Activated CD8-positive, alpha-beta memory T cell treated with anti-CD3 and anti-CD28 coated beads, Interleukin-2, amount 10 ng/mL, durations not matched to agents 7 days and 5 days (primary cell): ENCODE measurements at regions of chr19 and their contacts with region 1.

Region 1: GRCh38 chr19:8355631-8356402 is 8.1 kb upstream of the ANGPTL4 start:
- DNase-seq: no peak
- ATAC-seq: no peak
- H3K4me3 Mint-ChIP-seq: no peak overlapping the region
- H3K27ac Mint-ChIP-seq: no peak overlapping the region
- H3K4me1 Mint-ChIP-seq: peaks cover 11% of the 10 kb centered on the region
- H3K27me3 Mint-ChIP-seq: peaks cover 13% of the 10 kb centered on the region

Region 2: GRCh38 chr19:8148410-8149231 is 207.2 kb before region 1 on chr19:
- CTCF ChIA-PET with region 1: no interaction called
- DNase-seq: no peak
- ATAC-seq: no peak
- H3K4me3 Mint-ChIP-seq: no peak overlapping the region
- H3K27ac Mint-ChIP-seq: no peak overlapping the region
- H3K4me1 Mint-ChIP-seq: peaks cover 3% of the 10 kb centered on the region
- H3K27me3 Mint-ChIP-seq: peaks cover 53% of the 10 kb centered on the region

Region 3: DNA sequence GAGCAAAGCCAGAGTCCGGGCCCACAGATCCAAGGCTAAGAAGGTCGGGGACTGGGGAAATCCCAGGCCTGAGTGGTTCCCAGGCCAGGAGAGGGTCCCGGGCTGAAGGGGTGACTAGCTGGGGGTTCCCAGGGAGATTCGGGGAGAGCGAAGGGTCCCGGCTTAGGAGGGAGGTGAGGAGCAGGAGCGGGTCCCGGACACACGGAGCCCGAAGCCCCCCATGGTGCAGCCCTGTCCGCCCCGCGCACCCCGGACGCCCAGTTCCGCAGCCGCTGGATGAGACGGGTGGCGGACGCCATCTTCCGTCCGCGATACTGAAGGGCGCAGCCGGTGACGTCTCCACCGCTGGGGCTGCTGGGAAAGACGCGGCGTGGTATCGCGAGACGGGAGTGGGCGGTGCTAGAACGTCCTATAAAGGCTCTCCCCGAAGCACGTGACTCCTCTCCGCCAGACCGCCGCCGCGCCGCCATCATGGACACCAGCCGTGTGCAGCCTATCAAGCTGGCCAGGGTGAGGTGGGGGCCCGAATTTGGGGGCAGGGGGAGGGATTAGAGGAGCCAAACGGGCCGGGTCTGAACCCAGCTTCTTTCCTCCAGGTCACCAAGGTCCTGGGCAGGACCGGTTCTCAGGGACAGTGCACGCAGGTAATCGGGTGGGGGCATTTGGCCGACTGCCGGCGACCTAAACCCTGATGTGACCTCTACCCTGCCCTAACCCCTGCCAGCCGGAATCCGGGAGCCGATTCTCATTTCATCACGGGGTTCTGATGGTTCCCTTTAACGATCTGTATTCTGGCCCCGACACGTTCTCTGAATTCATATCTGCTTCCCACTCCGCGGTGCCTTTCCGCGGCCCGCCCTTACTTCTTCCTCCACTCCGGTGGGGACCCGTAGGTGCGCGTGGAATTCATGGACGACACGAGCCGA is 34.5 kb before region 1 on chr19 and contains the starts of genes NDUFA7 and RPS28:
- CTCF ChIA-PET with region 1: interaction called, 12 read pairs
- DNase-seq: peak; percentile 98
- ATAC-seq: peak; percentile 92
- H3K4me3 Mint-ChIP-seq: peak within 1 kb of the TSS; percentile 99
- H3K27ac Mint-ChIP-seq: peak within 1 kb of the TSS; percentile 98
- H3K4me1 Mint-ChIP-seq: peaks cover 36% of the 10 kb centered on the region
- H3K27me3 Mint-ChIP-seq: no peaks in the 10 kb centered on the region
- total RNA-seq, gene NDUFA7: 47.4 to 66.7 TPM
- total RNA-seq, gene RPS28: 1,292 to 1,333 TPM

Region 4: GRCh38 chr19:8342684-8343482 is 12.9 kb before region 1 on chr19 and contains the start of gene KANK3:
- CTCF ChIA-PET with region 1: interaction called, 48 read pairs
- DNase-seq: peak; percentile 98
- ATAC-seq: peak; percentile 100
- H3K4me3 Mint-ChIP-seq: peak within 1 kb of the TSS; percentile 68
- H3K27ac Mint-ChIP-seq: no peak within 1 kb of the TSS
- H3K4me1 Mint-ChIP-seq: peaks cover 15% of the 10 kb centered on the region
- H3K27me3 Mint-ChIP-seq: peaks cover 21% of the 10 kb centered on the region
- total RNA-seq, gene KANK3: 3.2 to 3.7 TPM

Region 5: DNA sequence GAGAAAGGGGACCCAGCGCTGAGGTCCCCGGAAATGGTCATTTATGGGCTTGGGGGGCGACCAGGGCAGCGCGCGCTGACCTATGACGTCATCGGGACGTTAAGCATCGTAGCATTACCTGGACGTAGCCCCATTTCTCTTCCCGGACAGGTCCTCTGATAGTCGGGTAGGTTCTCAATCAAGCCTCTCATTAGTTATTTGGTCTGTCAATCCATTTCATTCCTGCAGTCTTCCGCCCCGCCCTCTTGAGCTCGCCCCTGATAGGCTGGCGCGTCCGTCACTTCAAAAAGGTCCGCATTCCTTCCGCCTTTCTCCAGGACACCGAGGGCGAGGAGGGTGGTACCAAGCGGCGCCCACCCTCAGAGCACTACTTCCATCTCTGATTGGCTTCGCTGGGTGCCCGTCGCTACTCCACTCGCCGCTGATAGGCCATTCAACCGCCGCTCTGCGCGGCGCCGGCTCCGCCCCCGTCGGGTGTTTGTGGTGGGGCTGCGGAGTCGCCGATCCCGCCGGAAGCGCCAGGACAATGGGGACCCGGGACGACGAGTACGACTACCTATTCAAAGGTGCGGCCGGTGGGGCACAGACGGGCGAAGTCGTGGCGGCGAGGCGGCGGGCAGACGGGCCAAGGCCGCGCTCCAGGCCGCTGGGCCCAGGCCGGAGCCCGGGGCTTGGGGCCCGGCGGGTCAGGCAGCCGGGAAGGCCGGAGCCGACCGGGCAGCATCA is 34.2 kb after region 1 on chr19 and contains the start of gene RAB11B:
- CTCF ChIA-PET with region 1: interaction called, 22 read pairs
- DNase-seq: peak; percentile 100
- ATAC-seq: peak; percentile 93
- H3K4me3 Mint-ChIP-seq: peak within 1 kb of the TSS; percentile 84
- H3K27ac Mint-ChIP-seq: peak within 1 kb of the TSS; percentile 98
- H3K4me1 Mint-ChIP-seq: peaks cover 25% of the 10 kb centered on the region
- H3K27me3 Mint-ChIP-seq: no peaks in the 10 kb centered on the region
- total RNA-seq, gene RAB11B: 96.2 to 97.3 TPM

Region 6: DNA sequence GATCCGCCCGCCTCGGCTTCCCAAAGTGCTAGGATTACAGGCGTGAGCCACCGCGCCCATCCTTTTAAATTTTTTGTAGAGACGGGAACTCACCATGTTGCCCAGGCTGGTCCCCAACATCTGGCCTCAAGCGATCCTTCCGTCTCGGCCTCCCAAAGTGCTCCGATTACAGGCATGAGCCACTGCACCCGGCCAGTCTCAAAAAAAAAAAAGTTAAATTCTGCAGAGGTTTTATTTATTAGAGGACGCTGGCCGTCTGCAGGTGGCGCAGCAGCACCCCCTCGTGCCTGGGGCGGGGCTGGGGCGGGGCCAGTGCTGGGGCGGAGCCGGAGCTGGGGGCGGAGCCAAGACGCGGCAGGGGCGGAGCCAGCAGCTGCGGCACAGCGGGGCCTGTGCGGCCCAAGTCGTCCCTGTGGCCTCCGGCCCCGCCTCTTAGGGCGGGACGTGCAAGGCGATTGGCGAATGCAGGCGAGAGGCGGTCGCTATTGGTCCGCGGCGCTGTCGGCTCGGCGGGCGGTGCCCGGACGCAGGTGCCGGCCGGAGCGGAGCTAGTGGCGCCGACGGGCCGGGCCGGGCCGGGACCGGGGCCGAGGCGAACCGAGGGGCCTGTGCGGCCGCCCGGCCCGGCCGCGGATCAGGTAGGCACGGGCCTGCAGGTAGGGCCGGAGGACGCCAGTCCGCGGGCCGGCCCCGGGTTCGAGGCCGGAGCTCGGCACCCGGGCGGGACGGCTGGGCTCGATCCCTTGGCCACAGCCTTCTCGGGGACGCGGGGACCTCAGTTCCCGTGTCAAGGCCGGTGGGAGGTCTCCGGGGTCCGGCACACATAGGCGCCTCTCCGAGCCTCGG is 57.2 kb after region 1 on chr19 and contains the start of gene MARCHF2:
- CTCF ChIA-PET with region 1: interaction called, 19 read pairs
- DNase-seq: peak; percentile 97
- ATAC-seq: peak; percentile 100
- H3K4me3 Mint-ChIP-seq: peak within 1 kb of the TSS; percentile 54
- H3K27ac Mint-ChIP-seq: peak within 1 kb of the TSS; percentile 61
- H3K4me1 Mint-ChIP-seq: peaks cover 8% of the 10 kb centered on the region
- H3K27me3 Mint-ChIP-seq: no peaks in the 10 kb centered on the region
- total RNA-seq, gene MARCHF2: 16.5 to 20.9 TPM

Region 7: DNA sequence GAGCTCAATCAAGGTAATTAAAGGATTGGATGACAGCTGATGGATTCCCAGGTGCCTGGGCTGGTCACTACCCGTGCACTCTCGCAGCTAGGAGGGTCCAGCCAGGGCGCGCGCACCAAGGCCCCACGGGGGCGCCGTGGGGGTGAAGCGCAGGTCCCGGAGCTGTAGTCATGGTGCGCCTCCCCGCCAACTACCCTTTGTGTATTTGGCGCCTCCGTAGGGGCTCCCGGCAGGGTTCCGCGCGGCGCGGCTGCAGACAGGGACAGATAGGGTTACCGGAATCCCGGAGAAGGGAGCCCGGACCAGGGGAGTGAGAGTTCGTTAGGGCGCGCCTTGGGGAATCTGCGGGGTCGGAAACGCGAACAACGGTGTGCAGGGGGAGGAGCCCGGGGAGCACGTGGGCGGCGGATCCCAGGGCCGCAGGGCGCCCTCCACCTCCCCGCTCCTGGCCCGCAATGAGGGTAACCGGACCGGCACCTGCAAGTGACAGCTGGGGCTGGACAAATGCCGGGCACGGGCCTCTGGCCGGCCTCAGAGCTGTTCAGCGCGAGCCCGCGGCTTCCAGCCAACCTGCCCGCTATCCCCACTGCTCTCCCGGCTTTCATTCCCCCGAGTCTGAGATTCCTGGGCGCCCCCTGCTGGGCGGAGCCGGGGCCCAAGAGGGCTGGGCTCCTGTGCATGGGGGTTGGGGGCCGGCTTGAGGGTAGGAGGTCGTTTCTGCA is 150.0 kb after region 1 on chr19:
- CTCF ChIA-PET with region 1: interaction called, 19 read pairs
- DNase-seq: peak; percentile 71
- ATAC-seq: peak; percentile 83
- H3K4me3 Mint-ChIP-seq: peak overlapping the region; percentile 82
- H3K27ac Mint-ChIP-seq: peak overlapping the region; percentile 78
- H3K4me1 Mint-ChIP-seq: peaks cover 15% of the 10 kb centered on the region
- H3K27me3 Mint-ChIP-seq: no peaks in the 10 kb centered on the region